Dorsolateral prefrontal cortex (tissue), 120 donors: ENCODE measurements at regions of chr3 and their contacts with region 1.

Region 1: DNA sequence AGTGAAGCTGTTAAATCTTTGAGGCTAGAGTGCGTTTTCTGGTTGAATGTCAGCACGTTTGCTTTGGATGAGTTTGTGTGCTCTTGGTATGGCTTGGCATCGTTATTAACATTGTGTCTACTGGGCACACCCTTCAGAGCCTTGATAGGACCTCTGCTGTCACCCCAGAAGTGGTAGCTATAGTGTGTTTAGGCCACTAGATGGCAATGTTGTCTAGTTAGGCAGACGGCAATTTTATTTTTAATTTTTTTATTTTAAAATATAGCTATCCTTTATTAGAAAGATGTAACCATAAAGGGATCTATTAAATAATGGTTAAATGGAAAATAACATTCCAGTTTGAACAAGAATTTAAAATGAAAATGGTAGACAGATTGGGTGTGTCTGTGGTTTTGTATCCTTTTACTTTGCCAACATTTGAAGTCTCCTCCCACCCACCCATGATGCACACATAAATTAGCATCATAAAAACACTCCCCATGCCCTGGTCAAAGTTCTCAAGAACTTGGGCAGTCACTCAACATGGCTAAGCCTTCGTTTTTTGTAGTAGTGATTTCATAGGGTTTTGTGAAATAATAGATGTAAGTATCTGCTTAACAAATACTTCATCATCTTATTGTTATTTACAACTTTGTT is 200.7 kb downstream of the KCNH8 start:
- DNase-seq: no peak
- H3K4me3 ChIP-seq: no peak overlapping the region
- H3K27ac ChIP-seq: peak overlapping the region in 4 of 59 donors; percentile 2 to 37 (median 24)
- H3K27me3 ChIP-seq: no peaks in the 10 kb centered on the region
- CTCF ChIP-seq: peak; percentile 44 to 81 (median 69)

Region 2: GRCh38 chr3:19146685-19147650 is 202.1 kb before region 1 on chr3:
- intact Hi-C with region 1: loop called (anchors 5 to 10 kb)
- DNase-seq: peak; percentile 23 to 85 (median 76)
- H3K4me3 ChIP-seq: peak overlapping the region; percentile 53 to 91 (median 72)
- H3K27ac ChIP-seq: peak overlapping the region; percentile 12 to 98 (median 93)
- H3K27me3 ChIP-seq: peaks cover 0 to 41% (median 11%) of the 10 kb centered on the region in 45 donors
- CTCF ChIP-seq: peak in 55 of 56 donors; percentile 15 to 71 (median 52)

Region 3: DNA sequence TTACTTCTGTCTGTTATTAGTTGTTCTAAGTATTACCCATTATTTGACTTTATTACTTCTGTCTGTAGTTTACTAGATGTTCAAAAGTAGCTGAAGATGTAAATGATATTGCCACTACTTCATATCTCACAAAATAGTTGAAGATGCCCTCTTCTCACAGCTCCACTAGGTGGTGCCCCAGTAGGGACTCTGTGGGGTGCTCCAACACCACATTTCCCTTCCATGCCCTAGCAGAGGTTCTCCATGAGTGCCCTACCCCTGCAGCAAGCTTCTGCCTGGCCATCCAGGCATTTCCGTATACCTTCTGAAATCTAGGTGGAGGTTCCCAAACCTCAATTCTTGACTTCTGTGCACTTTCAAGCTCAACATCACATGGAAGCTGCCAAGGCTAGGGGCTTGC is 120.0 kb before region 1 on chr3:
- intact Hi-C with region 1: loop called in 1 of 2 experiments (anchors 5 kb)
- DNase-seq: no peak
- H3K4me3 ChIP-seq: no peak overlapping the region
- H3K27ac ChIP-seq: no peak overlapping the region
- H3K27me3 ChIP-seq: no peaks in the 10 kb centered on the region
- CTCF ChIP-seq: peak in 2 of 56 donors; percentile 5 to 10

Region 4: GRCh38 chr3:19256313-19256712 is 92.7 kb before region 1 on chr3:
- intact Hi-C with region 1: no loop called
- DNase-seq: no peak
- H3K4me3 ChIP-seq: no peak overlapping the region
- H3K27ac ChIP-seq: no peak overlapping the region
- H3K27me3 ChIP-seq: no peaks in the 10 kb centered on the region
- CTCF ChIP-seq: no peak

Region 5: DNA sequence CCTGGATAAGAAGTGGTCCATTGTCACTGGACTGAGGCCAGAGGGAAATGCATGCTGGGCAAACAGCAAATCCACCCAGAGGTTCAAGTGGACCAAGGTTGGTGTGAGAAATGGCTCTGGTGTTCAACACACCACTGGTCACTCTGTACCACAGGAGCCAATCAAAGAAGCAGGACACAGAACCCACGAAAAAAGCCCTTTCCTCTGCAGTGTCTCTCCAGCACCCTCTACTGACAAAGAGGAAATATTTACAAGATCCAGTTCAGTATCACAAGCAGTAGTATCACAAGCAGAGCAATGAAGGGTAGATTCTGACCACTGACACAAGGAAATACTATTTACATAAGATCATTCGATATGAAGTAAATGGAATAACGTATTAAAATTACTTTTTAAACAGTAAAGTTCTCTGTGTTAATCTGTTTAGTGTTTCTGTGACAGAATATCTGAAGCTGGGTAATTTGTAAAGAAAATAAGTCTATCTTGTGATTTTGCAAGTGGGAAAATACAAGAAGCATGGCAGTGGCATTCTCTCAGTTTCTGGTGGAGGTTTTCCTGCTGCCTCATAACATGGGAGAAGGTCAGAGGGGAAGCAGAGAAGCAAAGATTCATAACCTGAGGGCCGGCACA is 194.3 kb after region 1 on chr3:
- intact Hi-C with region 1: loop called (anchors 2 to 5 kb)
- DNase-seq: no peak
- H3K4me3 ChIP-seq: no peak overlapping the region
- H3K27ac ChIP-seq: no peak overlapping the region
- H3K27me3 ChIP-seq: no peaks in the 10 kb centered on the region
- CTCF ChIP-seq: peak in 54 of 56 donors; percentile 31 to 81 (median 62)

Region 6: DNA sequence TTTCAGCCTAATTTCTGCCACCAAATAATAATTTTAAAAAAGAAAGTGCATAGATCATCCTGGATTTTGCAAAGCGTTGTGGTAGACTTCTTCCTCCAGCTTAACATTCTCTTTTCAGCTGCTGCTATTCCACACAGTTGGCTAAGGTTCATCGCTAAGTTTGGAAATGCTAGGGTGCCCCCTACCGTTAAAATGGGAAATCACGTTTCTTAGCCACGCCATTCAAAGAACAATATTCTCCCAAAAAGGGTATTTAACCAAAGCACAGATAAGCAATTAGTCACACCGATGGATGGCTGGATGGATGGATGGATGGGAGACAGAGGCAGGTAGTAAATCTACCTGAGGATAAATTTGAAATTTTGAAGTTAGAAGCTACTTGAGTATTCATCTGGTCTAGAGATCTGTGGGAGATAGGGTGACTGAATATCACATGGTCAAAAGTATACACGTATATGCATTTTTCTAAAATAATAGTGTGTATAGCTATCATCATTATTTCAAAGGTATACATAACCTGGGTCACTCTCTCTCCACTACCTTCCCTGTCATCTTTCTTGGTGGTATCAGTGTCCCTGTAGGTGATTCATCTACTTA is 517.8 kb after region 1 on chr3:
- intact Hi-C with region 1: loop called (anchors 5 kb)
- DNase-seq: peak in 4 of 10 donors; percentile 36 to 67 (median 56)
- H3K4me3 ChIP-seq: peak overlapping the region in 3 of 59 donors; percentile 11 to 31 (median 17)
- H3K27ac ChIP-seq: no peak overlapping the region
- H3K27me3 ChIP-seq: no peaks in the 10 kb centered on the region
- CTCF ChIP-seq: peak; percentile 64 to 92 (median 84)